Stomach (tissue), 19 donors: ENCODE measurements at regions of chr7 and their contacts with region 1.

Region 1: GRCh38 chr7:76185187-76185896 is 16.4 kb upstream of the SRRM3 start:
- DNase-seq: no peak
- H3K4me3 ChIP-seq: no peak overlapping the region
- H3K27ac ChIP-seq: no peak overlapping the region
- H3K4me1 ChIP-seq: no peaks in the 10 kb centered on the region
- H3K27me3 ChIP-seq: peaks cover 0 to 5% (median 2%) of the 10 kb centered on the region in 3 donors
- CTCF ChIP-seq: no peak
- EP300 ChIP-seq: no peak
- POLR2A ChIP-seq: no peak

Region 2: GRCh38 chr7:76278540-76278939 is 93.2 kb after region 1 on chr7:
- intact Hi-C with region 1: loop called (anchors 10 kb)
- DNase-seq: no peak
- H3K4me3 ChIP-seq: no peak overlapping the region
- H3K27ac ChIP-seq: no peak overlapping the region
- H3K4me1 ChIP-seq: peaks cover 16 to 28% (median 20%) of the 10 kb centered on the region in 4 donors
- H3K27me3 ChIP-seq: peaks cover 0 to 91% (median 40%) of the 10 kb centered on the region in 3 donors
- CTCF ChIP-seq: no peak
- EP300 ChIP-seq: no peak
- POLR2A ChIP-seq: no peak

Region 3: GRCh38 chr7:76512941-76513816 is 327.8 kb after region 1 on chr7:
- intact Hi-C with region 1: no loop called
- DNase-seq: peak in 1 of 2 donors; percentile 57
- H3K4me3 ChIP-seq: no peak overlapping the region
- H3K27ac ChIP-seq: peak overlapping the region in 3 of 5 donors; percentile 46 to 55 (median 49)
- H3K4me1 ChIP-seq: peaks cover 20 to 43% (median 24%) of the 10 kb centered on the region in 4 donors
- H3K27me3 ChIP-seq: peaks cover 0 to 10% (median 0%) of the 10 kb centered on the region in 3 donors
- CTCF ChIP-seq: peak in 2 of 7 experiments; percentile 10 to 31
- EP300 ChIP-seq: no peak
- POLR2A ChIP-seq: no peak